WTC11 (cell line): ENCODE measurements at regions of chr1 and their contacts with region 1.

Region 1: DNA sequence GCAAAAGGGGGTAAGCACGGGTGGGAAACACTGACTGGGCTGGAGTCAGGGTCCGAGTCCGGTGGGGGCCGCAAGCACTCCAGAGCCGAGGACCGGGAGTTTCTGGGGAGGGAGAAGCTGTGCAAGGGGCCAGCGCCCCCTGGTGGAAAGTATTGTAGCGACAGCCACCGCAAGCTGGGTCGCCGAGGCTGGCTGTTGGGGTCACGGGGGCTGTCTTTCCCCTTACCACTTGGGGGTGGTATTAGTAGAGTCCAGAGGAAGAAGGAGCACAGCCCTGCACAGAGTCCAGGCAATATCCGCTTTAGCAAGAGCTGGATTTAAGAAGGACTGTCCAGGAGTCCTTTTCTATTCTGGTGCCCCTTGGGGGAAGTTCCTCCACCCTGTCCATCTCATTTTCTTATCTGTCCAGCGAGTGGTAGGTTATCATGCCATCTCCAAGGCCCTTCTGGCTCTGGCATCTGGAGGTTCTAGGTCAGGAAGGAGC is 17.9 kb upstream of the ETV3 start:
- DNase-seq: peak; percentile 93
- ATAC-seq: peak; percentile 83
- H3K4me3 Mint-ChIP-seq: peak overlapping the region; percentile 54
- H3K27ac Mint-ChIP-seq: no peak overlapping the region
- H3K4me1 Mint-ChIP-seq: peaks cover 57% of the 10 kb centered on the region
- H3K27me3 Mint-ChIP-seq: no peaks in the 10 kb centered on the region; the same call in 1 of the 2 replicates
- CTCF ChIP-seq: peak; percentile 99

Region 2: DNA sequence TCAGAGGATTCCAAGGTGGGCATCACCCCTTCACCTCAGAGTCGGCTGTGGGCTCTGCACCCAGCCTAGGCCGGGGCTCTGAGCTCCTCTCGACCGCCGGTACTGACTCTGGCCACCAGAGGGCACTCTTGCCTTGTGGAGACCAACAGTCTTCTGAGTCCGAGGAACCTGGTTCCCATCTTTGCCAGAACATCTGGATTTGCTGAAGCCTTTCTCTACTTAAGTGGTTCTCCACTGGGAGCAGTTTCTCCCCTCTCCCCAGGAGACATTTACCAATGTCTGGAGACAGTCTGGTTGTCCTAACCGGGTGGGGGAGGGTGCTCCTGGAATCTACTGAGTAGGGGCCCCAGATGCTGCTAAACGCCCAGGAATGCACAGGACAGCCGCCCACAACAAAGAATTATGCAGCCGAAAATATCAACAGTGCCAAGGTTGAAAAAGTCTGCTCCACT is 65.9 kb before region 1 on chr1:
- CTCF ChIA-PET with region 1: interaction called, 304 read pairs
- POLR2A ChIA-PET with region 1: interaction called, 4 read pairs
- DNase-seq: peak; percentile 96
- ATAC-seq: peak; percentile 94
- H3K4me3 Mint-ChIP-seq: no peak overlapping the region
- H3K27ac Mint-ChIP-seq: no peak overlapping the region
- H3K4me1 Mint-ChIP-seq: peaks cover 23% of the 10 kb centered on the region
- H3K27me3 Mint-ChIP-seq: no peaks in the 10 kb centered on the region; the same call in 1 of the 2 replicates
- CTCF ChIP-seq: peak; percentile 88

Region 3: GRCh38 chr1:157105988-157106812 is 49.9 kb before region 1 on chr1:
- CTCF ChIA-PET with region 1: interaction called, 10 read pairs
- POLR2A ChIA-PET with region 1: interaction called, 3 read pairs
- DNase-seq: no peak
- ATAC-seq: no peak
- H3K4me3 Mint-ChIP-seq: no peak overlapping the region
- H3K27ac Mint-ChIP-seq: no peak overlapping the region
- H3K4me1 Mint-ChIP-seq: peaks cover 29% of the 10 kb centered on the region
- H3K27me3 Mint-ChIP-seq: peaks cover 35% of the 10 kb centered on the region
- CTCF ChIP-seq: no peak

Region 4: DNA sequence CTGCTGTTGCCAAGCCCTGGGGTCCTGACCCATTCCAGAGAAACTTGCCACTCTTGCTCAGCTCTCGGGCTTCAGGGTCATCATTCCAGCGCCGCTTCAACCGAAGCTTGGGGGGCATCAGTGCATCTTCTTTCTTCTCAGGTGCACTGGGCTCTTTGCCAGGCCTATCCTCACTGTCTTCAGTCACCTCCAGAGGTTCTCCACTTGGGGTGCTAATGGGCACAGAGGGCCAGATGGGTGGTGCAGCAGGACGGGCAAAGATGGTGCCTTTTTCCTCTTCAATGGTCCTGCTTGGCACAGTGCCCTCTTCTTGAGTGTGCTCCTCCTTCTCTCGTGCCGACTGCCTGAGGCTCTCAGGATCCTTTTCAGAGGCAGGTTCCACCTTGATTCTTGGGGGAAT is 31.2 kb before region 1 on chr1:
- CTCF ChIA-PET with region 1: interaction called, 11 read pairs
- POLR2A ChIA-PET with region 1: no interaction called
- DNase-seq: no peak
- ATAC-seq: no peak
- H3K4me3 Mint-ChIP-seq: no peak overlapping the region
- H3K27ac Mint-ChIP-seq: no peak overlapping the region
- H3K4me1 Mint-ChIP-seq: peaks cover 13% of the 10 kb centered on the region
- H3K27me3 Mint-ChIP-seq: no peaks in the 10 kb centered on the region
- CTCF ChIP-seq: no peak

Region 5: DNA sequence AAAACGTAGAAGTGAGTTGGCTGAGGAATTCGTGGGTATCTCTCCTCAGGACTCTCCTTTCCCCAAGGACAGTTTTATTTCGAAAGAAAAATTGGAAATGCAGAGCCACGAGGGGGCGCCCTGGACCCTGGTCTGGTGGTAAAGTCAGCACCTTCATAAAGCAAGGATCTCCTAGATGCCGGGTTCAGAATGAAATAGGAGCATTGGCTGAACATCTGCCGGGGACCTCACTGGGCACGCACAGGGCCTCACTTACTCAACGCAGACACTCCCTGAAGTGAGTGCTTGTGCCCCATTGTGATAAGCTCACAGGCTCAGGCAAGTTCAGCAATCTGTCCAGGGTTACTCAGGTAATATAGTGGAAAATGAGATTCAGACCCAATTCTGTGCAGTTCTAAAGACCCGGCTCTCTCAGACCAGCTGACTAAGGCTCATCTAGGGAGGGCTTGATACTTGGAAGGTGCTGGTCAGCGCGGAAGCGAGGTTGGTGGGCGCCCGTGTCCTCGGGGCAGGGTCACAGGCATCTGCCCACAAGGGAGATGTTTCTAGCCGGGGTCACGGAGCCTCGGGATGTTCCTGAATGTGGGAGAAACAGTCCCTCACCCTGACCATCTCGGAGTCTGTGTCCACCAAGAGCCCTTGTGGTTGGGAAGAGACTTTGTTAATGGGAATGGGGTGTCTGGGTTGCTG is 37.7 kb after region 1 on chr1:
- CTCF ChIA-PET with region 1: interaction called, 13 read pairs
- POLR2A ChIA-PET with region 1: no interaction called
- DNase-seq: peak; percentile 90
- ATAC-seq: peak; percentile 56
- H3K4me3 Mint-ChIP-seq: no peak overlapping the region
- H3K27ac Mint-ChIP-seq: no peak overlapping the region
- H3K4me1 Mint-ChIP-seq: peaks cover 21% of the 10 kb centered on the region
- H3K27me3 Mint-ChIP-seq: peaks cover 12% of the 10 kb centered on the region
- CTCF ChIP-seq: peak; percentile 45; the same call in 1 of the 2 replicates